K562 (cell line): ENCODE measurements at regions of chr3 and their contacts with region 1.

Region 1: DNA sequence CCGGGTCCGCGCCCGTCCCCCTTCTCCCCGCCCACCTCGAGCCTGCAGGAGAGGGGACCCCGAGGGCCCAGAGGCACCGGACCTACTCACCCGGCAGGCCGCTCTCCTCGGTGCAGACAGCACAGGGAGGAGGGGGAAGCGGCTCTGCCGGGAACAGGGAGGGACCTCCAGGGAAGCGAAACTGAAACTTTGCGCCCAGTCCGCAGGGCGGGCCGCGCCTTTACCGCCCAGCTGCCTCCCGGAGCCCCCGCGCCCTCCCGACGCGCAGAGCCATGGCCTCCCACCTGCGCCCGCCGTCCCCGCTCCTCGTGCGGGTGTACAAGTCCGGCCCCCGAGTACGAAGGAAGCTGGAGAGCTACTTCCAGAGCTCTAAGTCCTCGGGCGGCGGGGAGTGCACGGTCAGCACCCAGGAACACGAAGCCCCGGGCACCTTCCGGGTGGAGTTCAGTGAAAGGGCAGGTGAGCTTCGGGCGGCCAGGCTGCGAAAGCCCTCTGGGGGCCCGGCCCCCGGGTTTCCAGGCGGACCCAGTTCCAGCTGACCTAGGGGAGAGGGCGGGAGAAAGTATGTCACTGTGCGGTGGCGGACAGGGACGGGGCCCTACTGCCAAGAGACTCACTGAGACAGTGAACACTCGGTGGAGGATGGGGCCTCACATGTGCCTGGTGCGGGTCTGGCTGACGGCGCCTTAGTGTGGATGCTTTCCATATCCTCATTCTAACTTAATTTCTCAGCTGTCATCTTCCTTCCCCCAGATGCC is at the starts of genes DTX3L and PARP9:
- DNase-seq: peak; percentile 64 to 81 (median 69)
- ATAC-seq: peak; percentile 96
- H3K4me3 ChIP-seq: peak within 1 kb of the TSS; percentile 66
- H3K27ac ChIP-seq: peak within 1 kb of the TSS; percentile 80
- H3K4me1 ChIP-seq: peaks cover 8% of the 10 kb centered on the region in 2 experiments; a peak in 4 of 5 replicates
- H3K27me3 ChIP-seq: no peaks in the 10 kb centered on the region
- CTCF ChIP-seq: no peak
- EP300 ChIP-seq: no peak
- POLR2A ChIP-seq: peak; percentile 69
- RAD21 ChIP-seq: no peak
- polyA plus RNA-seq, gene DTX3L: 2.3 to 2.5 TPM
- polyA plus RNA-seq, gene PARP9: 2.1 to 3.2 TPM

Region 2: DNA sequence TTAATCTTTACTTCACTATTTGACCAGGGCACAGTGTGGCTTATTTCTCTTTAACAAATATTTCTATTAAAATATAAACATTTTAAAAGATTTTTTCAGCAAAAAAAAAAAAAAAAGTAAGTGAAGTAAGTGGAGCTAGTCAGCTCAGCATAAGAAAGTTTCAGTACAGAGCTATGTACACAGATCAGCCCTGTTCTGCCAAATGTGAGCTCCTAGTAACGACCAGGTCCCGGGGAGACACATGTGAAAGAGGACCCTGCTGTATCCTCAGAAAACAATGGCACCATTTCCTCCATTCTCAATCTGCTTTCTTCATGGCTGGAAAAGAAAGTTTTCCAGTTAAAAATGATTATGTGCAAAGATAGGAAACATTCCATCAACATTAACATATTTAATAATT is 225.9 kb before region 1 on chr3:
- CTCF ChIA-PET with region 1: no interaction called
- POLR2A ChIA-PET with region 1: no interaction called
- in situ Hi-C with region 1: no loop called
- intact Hi-C with region 1: no loop called
- DNase-seq: no peak
- ATAC-seq: no peak
- H3K4me3 ChIP-seq: no peak overlapping the region
- H3K27ac ChIP-seq: no peak overlapping the region
- H3K4me1 ChIP-seq: no peaks in the 10 kb centered on the region
- H3K27me3 ChIP-seq: no peaks in the 10 kb centered on the region; a peak in 2 of 5 replicates
- CTCF ChIP-seq: no peak
- EP300 ChIP-seq: no peak
- POLR2A ChIP-seq: no peak
- RAD21 ChIP-seq: no peak

Region 3: DNA sequence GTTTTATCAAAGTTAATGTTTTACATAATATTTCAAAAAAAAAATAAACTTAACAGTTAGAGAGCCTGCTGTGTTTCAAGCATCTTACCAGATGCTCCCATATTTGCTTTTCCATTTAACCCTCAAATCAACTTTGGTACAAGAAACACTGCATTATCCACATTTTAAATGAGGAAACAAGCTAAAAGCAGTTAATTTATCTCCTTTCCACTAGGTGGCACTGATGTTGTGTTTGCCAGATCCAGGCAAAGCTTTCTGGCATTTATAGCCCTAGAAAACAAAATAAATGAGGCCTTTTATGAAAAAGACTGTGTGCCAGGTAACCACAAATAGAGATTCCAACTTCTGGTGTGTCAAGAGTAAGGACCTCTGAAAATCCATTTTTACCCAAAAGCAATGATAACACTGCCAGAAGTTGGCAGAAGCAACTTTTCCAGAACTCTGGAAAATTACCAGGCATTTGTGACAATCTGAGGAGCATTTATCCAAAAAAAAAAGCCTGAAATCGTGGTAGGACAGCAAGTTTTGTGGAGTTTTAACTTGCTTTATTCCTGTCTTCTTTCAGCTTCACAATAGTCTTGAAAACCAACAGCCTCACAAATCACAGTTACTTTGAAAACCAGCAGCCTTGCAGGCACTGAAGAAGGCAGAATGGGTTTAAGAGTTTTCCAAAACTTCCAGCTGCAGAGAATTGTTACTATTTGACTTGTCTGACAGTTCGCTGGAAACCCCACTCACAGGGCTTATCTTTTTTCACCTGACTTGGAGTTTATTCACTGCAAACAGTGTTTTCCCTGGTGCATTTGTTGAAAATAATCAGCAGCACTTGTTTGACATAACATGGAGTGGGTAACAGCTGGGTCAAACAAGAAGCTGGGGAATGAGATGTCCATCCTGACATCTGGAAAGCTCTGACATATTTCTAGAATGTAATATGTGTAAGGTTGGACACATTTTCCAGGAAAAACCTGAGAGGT is 171.2 kb before region 1 on chr3:
- CTCF ChIA-PET with region 1: interaction called, 3 read pairs
- POLR2A ChIA-PET with region 1: no interaction called
- in situ Hi-C with region 1: no loop called
- intact Hi-C with region 1: loop called (anchors 5 kb)
- DNase-seq: peak; percentile 12 to 43 (median 14)
- ATAC-seq: peak; percentile 44; the same call in 1 of the 3 replicates
- H3K4me3 ChIP-seq: no peak overlapping the region
- H3K27ac ChIP-seq: no peak overlapping the region
- H3K4me1 ChIP-seq: peaks cover 0 to 6% of the 10 kb centered on the region in 2 experiments; a peak in 2 of 5 replicates
- H3K27me3 ChIP-seq: no peaks in the 10 kb centered on the region
- CTCF ChIP-seq: peak; percentile 34 to 65 (median 59); a peak in 4 of 6 replicates
- EP300 ChIP-seq: no peak
- POLR2A ChIP-seq: no peak
- RAD21 ChIP-seq: peak; percentile 64 to 75

Region 4: DNA sequence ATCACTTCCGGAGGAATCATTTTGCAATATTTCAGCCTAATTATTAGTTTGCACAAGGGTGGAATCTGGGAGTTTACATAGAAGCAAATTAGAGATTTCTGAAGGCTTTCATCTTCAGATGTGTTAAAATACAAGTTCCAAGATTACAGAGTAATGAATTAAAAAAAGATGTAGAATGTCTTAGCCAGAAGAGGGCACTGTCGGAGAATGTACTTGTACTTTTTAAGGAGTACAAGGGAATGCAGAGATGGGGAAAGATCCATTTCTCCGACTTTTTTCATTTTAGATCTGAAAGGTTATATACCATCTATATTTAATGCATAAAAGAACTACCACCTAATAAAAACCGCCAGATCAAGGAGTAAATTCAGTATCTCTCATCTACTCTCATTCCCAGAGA is 105.3 kb before region 1 on chr3:
- CTCF ChIA-PET with region 1: no interaction called
- POLR2A ChIA-PET with region 1: no interaction called
- in situ Hi-C with region 1: no loop called
- intact Hi-C with region 1: loop called (anchors 10 kb)
- DNase-seq: peak in 1 of 4 experiments; percentile 15
- ATAC-seq: no peak
- H3K4me3 ChIP-seq: no peak overlapping the region
- H3K27ac ChIP-seq: no peak overlapping the region
- H3K4me1 ChIP-seq: no peaks in the 10 kb centered on the region
- H3K27me3 ChIP-seq: no peaks in the 10 kb centered on the region
- CTCF ChIP-seq: peak in 2 of 3 experiments; percentile 22 to 55; a peak in 3 of 6 replicates
- EP300 ChIP-seq: no peak
- POLR2A ChIP-seq: no peak
- RAD21 ChIP-seq: peak; percentile 32 to 62; a peak in 3 of 4 replicates

Region 5: DNA sequence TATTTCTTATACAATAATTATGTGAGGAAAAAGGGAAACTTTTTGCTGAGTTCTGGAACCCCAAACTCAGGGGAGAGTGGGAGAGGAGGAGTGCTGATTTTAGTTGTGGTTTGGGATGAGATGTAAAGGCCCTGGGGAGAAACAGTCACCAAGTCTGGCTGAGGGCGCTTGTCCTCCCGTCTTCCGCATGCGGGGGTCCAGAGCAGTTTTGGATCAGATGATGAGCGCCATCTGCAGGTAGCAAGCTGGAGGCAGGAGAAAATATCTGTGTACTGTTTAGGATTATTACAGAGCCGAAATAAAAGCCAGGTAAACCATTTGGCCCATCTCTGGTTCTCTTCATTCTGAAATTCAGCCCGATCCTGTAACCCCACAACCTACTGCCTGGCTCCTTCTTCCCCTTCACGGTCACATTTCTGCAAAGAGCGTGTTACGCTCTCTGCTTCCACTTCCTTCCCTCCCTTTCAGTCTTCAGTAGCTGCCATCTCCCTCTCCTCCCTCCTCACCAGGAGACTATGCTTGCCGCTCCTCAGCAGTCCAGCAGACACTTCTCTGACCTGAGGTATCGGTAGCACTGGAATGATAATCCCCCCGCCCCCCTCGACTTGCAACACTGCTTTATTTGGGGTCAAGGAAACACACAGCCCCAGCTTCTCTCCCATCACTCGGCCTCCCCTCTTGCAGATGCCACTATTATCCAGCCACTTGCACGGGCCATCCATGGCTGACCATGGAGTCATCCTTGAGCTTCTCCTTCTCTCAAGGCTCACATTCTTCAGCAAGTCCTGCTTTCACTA is 114.9 kb after region 1 on chr3:
- CTCF ChIA-PET with region 1: interaction called, 6 read pairs
- POLR2A ChIA-PET with region 1: interaction called, 4 read pairs
- in situ Hi-C with region 1: no loop called
- intact Hi-C with region 1: loop called (anchors 1 kb)
- DNase-seq: peak; percentile 43 to 85 (median 54)
- ATAC-seq: peak; percentile 83
- H3K4me3 ChIP-seq: peak overlapping the region; percentile 77
- H3K27ac ChIP-seq: peak overlapping the region; percentile 80
- H3K4me1 ChIP-seq: peaks cover 13 to 17% of the 10 kb centered on the region in 2 experiments; a peak in 4 of 5 replicates
- H3K27me3 ChIP-seq: no peaks in the 10 kb centered on the region
- CTCF ChIP-seq: peak; percentile 76 to 84 (median 80)
- EP300 ChIP-seq: no peak
- POLR2A ChIP-seq: no peak
- RAD21 ChIP-seq: peak; percentile 81 to 85

Region 6: GRCh38 chr3:122730240-122730639 is 165.9 kb after region 1 on chr3:
- CTCF ChIA-PET with region 1: no interaction called
- POLR2A ChIA-PET with region 1: no interaction called
- in situ Hi-C with region 1: no loop called
- intact Hi-C with region 1: no loop called
- DNase-seq: peak; percentile 45 to 73 (median 62)
- ATAC-seq: peak; percentile 93
- H3K4me3 ChIP-seq: no peak overlapping the region
- H3K27ac ChIP-seq: peak overlapping the region; percentile 33; the same call in 2 of the 3 replicates
- H3K4me1 ChIP-seq: peaks cover under 1 to 9% of the 10 kb centered on the region in 2 experiments; a peak in 4 of 5 replicates
- H3K27me3 ChIP-seq: no peaks in the 10 kb centered on the region
- CTCF ChIP-seq: peak in 1 of 3 experiments; percentile 13; a peak in 1 of 6 replicates
- EP300 ChIP-seq: peak; percentile 30; the same call in 1 of the 2 replicates
- POLR2A ChIP-seq: no peak
- RAD21 ChIP-seq: no peak

Region 7: DNA sequence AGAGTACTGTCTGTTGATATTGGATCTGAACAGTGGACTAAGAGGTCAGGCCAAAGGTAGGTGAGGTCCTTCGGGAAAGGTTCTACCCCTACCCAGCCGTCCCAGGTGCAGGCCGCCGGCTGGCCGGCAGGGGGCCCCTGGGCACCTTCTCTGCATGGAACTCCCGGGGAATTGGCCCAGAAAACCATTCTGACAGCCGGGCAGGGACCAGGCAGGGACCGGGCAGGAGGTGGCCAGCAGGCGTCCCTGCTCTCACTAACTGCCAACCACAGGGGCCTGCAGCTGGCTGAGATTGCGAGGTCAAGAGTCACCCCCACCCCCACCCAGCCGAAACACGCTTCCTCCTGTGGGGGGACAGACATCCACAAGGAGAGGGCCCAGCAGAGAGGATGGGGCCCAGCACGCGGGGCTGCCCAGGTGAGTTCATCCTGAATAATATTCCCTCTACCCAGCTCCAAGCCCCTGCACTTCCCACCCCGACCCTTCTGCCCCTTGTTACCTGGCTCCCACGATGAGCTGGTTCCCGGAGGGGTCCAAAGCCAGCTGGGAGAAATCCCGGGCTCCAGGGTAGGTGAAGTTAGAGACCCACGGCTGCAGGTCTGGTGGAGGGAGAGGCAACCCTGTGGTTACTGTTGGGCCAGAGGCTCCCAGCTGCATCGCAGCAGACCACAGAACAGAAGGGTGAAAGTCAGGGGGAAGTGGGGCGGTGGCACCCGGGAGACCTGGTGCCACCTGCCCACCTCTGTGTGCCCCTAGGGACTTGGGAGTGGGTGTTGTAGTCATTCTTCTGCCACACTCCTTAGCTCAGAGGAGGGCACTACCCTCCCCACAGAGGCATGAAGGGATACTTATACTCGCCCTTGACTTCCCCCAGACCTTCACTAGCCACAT is 378.8 kb after region 1 on chr3:
- CTCF ChIA-PET with region 1: no interaction called
- POLR2A ChIA-PET with region 1: no interaction called
- in situ Hi-C with region 1: no loop called
- intact Hi-C with region 1: loop called (anchors 10 kb)
- DNase-seq: peak; percentile 48 to 67 (median 64)
- ATAC-seq: peak; percentile 86
- H3K4me3 ChIP-seq: no peak overlapping the region
- H3K27ac ChIP-seq: no peak overlapping the region
- H3K4me1 ChIP-seq: peaks cover 5 to 8% of the 10 kb centered on the region in 2 experiments; a peak in 3 of 5 replicates
- H3K27me3 ChIP-seq: peaks cover 0 to 10% of the 10 kb centered on the region in 2 experiments; a peak in 2 of 5 replicates
- CTCF ChIP-seq: peak; percentile 69 to 79 (median 79)
- EP300 ChIP-seq: no peak
- POLR2A ChIP-seq: no peak
- RAD21 ChIP-seq: peak; percentile 43 to 74; a peak in 3 of 4 replicates

Region 8: GRCh38 chr3:123028233-123028828 is 464.0 kb after region 1 on chr3:
- CTCF ChIA-PET with region 1: no interaction called
- POLR2A ChIA-PET with region 1: no interaction called
- in situ Hi-C with region 1: no loop called
- intact Hi-C with region 1: loop called (anchors 10 kb)
- DNase-seq: peak; percentile 47 to 56 (median 52)
- ATAC-seq: peak; percentile 71
- H3K4me3 ChIP-seq: peak overlapping the region; percentile 18; the same call in 1 of the 2 replicates
- H3K27ac ChIP-seq: no peak overlapping the region
- H3K4me1 ChIP-seq: peaks cover 5 to 20% of the 10 kb centered on the region in 2 experiments; a peak in 4 of 5 replicates
- H3K27me3 ChIP-seq: peaks cover 15 to 40% of the 10 kb centered on the region in 2 experiments; a peak in 4 of 5 replicates
- CTCF ChIP-seq: peak; percentile 49 to 59 (median 49); a peak in 5 of 6 replicates
- EP300 ChIP-seq: no peak
- POLR2A ChIP-seq: no peak
- RAD21 ChIP-seq: peak; percentile 54 to 57